AG04449 (cell line): ENCODE measurements at regions of chr10 and their contacts with region 1.

Region 1: GRCh38 chr10:50614444-50615137 is 9.2 kb downstream of the SGMS1 start:
- DNase-seq: no peak
- H3K4me3 ChIP-seq: no peak overlapping the region
- CTCF ChIP-seq: no peak

Region 2: GRCh38 chr10:50447691-50448090 is 166.9 kb before region 1 on chr10:
- CTCF ChIA-PET with region 1: no interaction called
- POLR2A ChIA-PET with region 1: no interaction called
- DNase-seq: no peak
- H3K4me3 ChIP-seq: no peak overlapping the region
- CTCF ChIP-seq: no peak

Region 3: GRCh38 chr10:50624866-50625692 is 10.5 kb after region 1 on chr10:
- CTCF ChIA-PET with region 1: interaction called, 16 read pairs
- POLR2A ChIA-PET with region 1: no interaction called
- DNase-seq: no peak
- H3K4me3 ChIP-seq: peak overlapping the region; percentile 83
- CTCF ChIP-seq: peak; percentile 74

Region 4: DNA sequence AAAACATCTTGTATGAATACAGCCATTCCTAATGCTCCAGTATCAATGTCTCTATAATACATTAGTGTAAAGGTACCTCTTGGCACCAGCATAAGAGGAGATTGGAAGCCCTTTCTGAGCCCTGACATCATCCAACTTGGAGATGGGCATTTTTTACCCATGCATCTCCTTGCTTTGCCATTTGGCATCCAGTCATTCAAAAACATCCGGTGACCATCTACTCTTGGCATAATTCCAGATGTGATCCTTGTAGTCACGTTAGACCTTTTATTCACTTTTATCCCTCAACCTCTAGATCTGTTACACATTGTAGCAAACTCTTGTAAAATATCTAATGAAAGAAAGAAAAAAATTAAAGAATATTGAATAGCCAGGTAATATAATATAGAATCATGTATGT is 27.0 kb after region 1 on chr10:
- CTCF ChIA-PET with region 1: no interaction called
- POLR2A ChIA-PET with region 1: no interaction called
- DNase-seq: no peak
- H3K4me3 ChIP-seq: no peak overlapping the region
- CTCF ChIP-seq: no peak